Mammary epithelial cell (primary cell): ENCODE measurements at regions of chr6 and their contacts with region 1.

Region 1: GRCh38 chr6:108689247-108690161 is 128.8 kb downstream of the FOXO3 start:
- DNase-seq: peak; percentile 100
- H3K4me3 ChIP-seq: no peak overlapping the region
- H3K27ac ChIP-seq: peak overlapping the region; percentile 79
- H3K4me1 ChIP-seq: peaks cover 57% of the 10 kb centered on the region
- H3K27me3 ChIP-seq: no peaks in the 10 kb centered on the region
- CTCF ChIP-seq: peak in 1 of 2 donors; percentile 1

Region 2: DNA sequence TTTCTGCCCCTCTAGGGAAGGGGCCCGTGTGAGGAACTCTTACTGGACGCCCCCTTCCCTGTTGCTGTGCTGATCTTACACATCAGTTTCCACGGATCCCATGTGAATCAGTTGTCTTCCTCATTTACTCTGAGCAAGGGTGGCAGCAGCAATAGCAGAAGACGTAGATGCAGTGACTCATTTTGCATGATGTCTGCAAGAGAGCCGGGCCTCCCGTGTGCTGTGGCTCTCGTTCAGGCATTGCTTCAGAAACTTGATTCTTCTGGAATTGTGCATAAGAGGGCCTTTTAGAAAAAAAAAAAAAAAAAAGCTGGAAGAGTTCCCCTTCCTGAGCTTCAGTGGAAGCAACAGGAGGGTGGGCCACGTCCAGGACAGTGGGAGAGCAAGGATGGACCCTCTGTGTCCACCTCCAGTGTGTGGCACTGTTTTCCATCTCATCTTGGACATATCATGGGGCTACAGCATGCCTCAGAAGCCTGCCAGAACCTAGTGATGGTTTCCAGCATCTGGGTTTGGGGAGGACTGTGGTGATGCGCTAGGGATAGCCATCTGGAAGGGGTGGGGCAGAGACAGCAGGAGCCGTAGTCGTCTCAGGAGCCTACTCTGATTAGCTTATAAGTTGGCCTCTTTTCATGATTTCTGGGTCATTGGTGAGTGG is 66.7 kb before region 1 on chr6:
- CTCF ChIA-PET with region 1: no interaction called
- dilution Hi-C with region 1: no loop called
- in situ Hi-C with region 1: no loop called
- intact Hi-C with region 1: no loop called
- DNase-seq: peak; percentile 37
- H3K4me3 ChIP-seq: no peak overlapping the region
- H3K27ac ChIP-seq: no peak overlapping the region
- H3K4me1 ChIP-seq: peaks cover 25% of the 10 kb centered on the region
- H3K27me3 ChIP-seq: no peaks in the 10 kb centered on the region
- CTCF ChIP-seq: no peak

Region 3: GRCh38 chr6:108655806-108656651 is 33.5 kb before region 1 on chr6:
- CTCF ChIA-PET with region 1: no interaction called
- dilution Hi-C with region 1: no loop called
- in situ Hi-C with region 1: no loop called
- intact Hi-C with region 1: loop called (anchors 2 kb)
- DNase-seq: no peak
- H3K4me3 ChIP-seq: no peak overlapping the region
- H3K27ac ChIP-seq: no peak overlapping the region
- H3K4me1 ChIP-seq: peaks cover 48% of the 10 kb centered on the region
- H3K27me3 ChIP-seq: no peaks in the 10 kb centered on the region
- CTCF ChIP-seq: no peak

Region 4: GRCh38 chr6:108732136-108732885 is 42.8 kb after region 1 on chr6:
- CTCF ChIA-PET with region 1: no interaction called
- dilution Hi-C with region 1: no loop called
- in situ Hi-C with region 1: no loop called
- intact Hi-C with region 1: loop called (anchors 1 kb)
- DNase-seq: peak; percentile 89
- H3K4me3 ChIP-seq: no peak overlapping the region
- H3K27ac ChIP-seq: no peak overlapping the region
- H3K4me1 ChIP-seq: peaks cover 38% of the 10 kb centered on the region
- H3K27me3 ChIP-seq: no peaks in the 10 kb centered on the region
- CTCF ChIP-seq: no peak

Region 5: GRCh38 chr6:108798670-108799353 is 109.3 kb after region 1 on chr6:
- CTCF ChIA-PET with region 1: interaction called, 10 read pairs
- dilution Hi-C with region 1: no loop called
- in situ Hi-C with region 1: no loop called
- intact Hi-C with region 1: no loop called
- DNase-seq: no peak
- H3K4me3 ChIP-seq: no peak overlapping the region
- H3K27ac ChIP-seq: no peak overlapping the region
- H3K4me1 ChIP-seq: no peaks in the 10 kb centered on the region
- H3K27me3 ChIP-seq: no peaks in the 10 kb centered on the region
- CTCF ChIP-seq: no peak